Sciatic nerve (tissue), 2 donors: ENCODE measurements at regions of chr2 and their contacts with region 1.

Region 1: DNA sequence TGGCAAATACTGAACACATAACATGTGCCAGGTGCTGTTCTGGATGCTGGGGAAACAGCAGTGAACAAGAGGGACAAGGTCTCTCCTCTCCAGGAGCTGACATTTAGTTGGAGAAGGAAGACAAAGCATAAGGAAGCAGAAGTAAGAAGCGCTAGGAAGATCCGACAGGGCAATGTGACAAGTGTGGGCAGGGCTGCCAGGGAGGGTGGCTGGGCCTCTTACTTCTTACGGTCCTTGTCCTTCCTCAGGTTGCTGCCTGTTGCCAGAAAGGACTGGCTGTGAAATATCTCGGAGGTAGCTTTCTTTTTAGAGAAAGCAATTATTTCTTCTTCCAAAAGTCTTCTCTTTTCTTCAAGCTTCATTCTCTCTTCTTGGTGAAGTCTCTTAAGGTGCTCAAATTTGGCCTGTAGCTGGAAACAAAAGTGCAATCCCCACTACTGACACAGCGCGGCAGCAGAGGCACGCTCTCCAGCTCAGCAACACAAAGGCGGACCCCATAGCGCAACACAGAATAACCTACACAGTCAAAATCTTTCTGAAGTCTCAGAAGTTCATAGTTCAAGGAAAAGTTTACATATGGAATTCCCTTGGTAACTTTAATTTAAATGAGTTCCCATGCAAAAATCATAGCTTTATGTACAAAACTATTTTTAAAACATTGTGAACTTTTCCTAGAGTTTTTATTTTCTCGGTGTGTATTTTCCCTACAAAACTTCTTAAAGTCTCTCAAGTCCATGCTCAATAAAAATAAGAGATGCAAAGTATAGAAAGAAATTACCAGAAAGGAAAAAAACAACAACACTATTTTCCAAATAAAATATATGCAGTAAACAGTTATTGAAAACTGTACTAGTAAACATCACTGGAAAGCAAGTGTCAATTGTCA is 67.7 kb downstream of the SEPTIN10 start:
- DNase-seq: peak; percentile 84
- ATAC-seq: peak; percentile 91

Region 2: DNA sequence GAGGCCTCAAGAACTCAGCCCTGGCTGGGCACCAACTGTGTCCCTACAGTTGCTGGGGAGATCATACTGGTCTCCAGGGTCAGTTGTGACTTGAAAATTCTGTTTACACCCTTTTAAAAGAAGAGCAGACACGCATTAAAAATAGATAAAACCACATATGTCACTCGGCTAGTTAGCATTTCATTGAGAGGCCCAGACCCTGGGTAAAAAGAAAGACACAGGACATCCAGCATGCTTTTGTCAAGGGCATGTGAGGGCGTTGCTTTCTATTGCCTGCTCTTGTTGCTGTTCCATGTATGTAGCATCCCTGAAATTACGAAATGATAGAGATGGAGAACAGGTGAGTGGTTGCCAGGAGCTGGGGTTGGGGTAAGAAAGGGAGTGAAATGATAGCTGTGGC is 26.6 kb before region 1 on chr2:
- intact Hi-C with region 1: loop called (anchors 2 kb)
- DNase-seq: no peak
- ATAC-seq: no peak

Region 3: GRCh38 chr2:109722026-109722425 is 176.0 kb after region 1 on chr2:
- intact Hi-C with region 1: loop called (anchors 10 kb)
- DNase-seq: no peak
- ATAC-seq: no peak